Left cardiac atrium (tissue), 4 donors: ENCODE measurements at regions of chr17 and their contacts with region 1.

Region 1: GRCh38 chr17:29833801-29834200 is 96.2 kb downstream of the SSH2 start:
- DNase-seq: no peak
- ATAC-seq: no peak

Region 2: GRCh38 chr17:29909236-29910003 is 75.6 kb after region 1 on chr17:
- intact Hi-C with region 1: loop called in 1 of 2 experiments (anchors 5 kb)
- DNase-seq: no peak
- ATAC-seq: no peak